ENCODE measurements at regions of chr3 and their contacts with region 1.

Region 1: DNA sequence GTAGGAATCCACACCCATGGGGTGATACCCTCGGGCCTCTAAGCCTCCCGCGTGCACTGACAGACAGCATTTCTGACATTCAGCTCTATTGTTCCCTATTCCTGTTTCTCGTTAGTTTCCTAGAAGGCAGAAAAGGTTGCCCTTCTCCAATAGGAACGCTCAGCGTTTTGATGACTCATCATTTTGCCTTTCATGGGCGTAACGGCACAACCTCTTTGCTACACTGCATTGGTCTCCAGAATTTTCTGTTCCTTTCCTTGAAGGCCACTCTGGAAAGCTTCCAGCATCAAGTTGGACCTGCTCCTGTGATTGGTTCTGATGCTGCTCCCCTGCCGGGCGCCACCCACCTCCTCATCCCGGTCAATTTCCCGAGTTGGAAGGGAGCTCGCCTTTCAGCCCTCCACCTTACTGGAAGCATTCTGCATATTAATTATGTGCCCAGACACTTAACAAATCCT is 13.0 kb upstream of the TNK2 start:
- DNase-seq: no peak
- ATAC-seq: no peak
- H3K4me3 ChIP-seq: no peak overlapping the region
- H3K4me3 Mint-ChIP-seq: no peak overlapping the region
- H3K27ac ChIP-seq: no peak overlapping the region
- H3K27ac Mint-ChIP-seq: no peak overlapping the region
- H3K4me1 ChIP-seq: peaks cover 3% of the 10 kb centered on the region
- H3K4me1 Mint-ChIP-seq: no peaks in the 10 kb centered on the region
- H3K27me3 ChIP-seq: peaks cover 0 to under 1% of the 10 kb centered on the region in 2 experiments
- H3K27me3 Mint-ChIP-seq: no peaks in the 10 kb centered on the region
- CTCF ChIP-seq: no peak

Region 2: GRCh38 chr3:195863121-195864006 is 58.0 kb before region 1 on chr3:
- CTCF ChIA-PET with region 1: interaction called, 208 read pairs
- POLR2A ChIA-PET with region 1: interaction called, 4 read pairs
- intact Hi-C with region 1: no loop called
- DNase-seq: peak; percentile 36 to 77 (median 66)
- ATAC-seq: peak; percentile 78
- H3K4me3 ChIP-seq: no peak overlapping the region
- H3K4me3 Mint-ChIP-seq: no peak overlapping the region
- H3K27ac ChIP-seq: no peak overlapping the region
- H3K27ac Mint-ChIP-seq: no peak overlapping the region
- H3K4me1 ChIP-seq: peaks cover 4% of the 10 kb centered on the region
- H3K4me1 Mint-ChIP-seq: peaks cover 4% of the 10 kb centered on the region
- H3K27me3 ChIP-seq: no peaks in the 10 kb centered on the region
- H3K27me3 Mint-ChIP-seq: no peaks in the 10 kb centered on the region
- CTCF ChIP-seq: peak; percentile 57

Region 3: GRCh38 chr3:195886181-195887141 is 34.9 kb before region 1 on chr3:
- CTCF ChIA-PET with region 1: interaction called, 195 read pairs
- POLR2A ChIA-PET with region 1: no interaction called
- intact Hi-C with region 1: loop called in 1 of 2 experiments (anchors 5 kb)
- DNase-seq: no peak
- ATAC-seq: no peak
- H3K4me3 ChIP-seq: no peak overlapping the region
- H3K4me3 Mint-ChIP-seq: no peak overlapping the region
- H3K27ac ChIP-seq: no peak overlapping the region
- H3K27ac Mint-ChIP-seq: no peak overlapping the region
- H3K4me1 ChIP-seq: no peaks in the 10 kb centered on the region
- H3K4me1 Mint-ChIP-seq: no peaks in the 10 kb centered on the region
- H3K27me3 ChIP-seq: no peaks in the 10 kb centered on the region
- H3K27me3 Mint-ChIP-seq: no peaks in the 10 kb centered on the region
- CTCF ChIP-seq: no peak